CD4-positive, alpha-beta memory T cell (primary cell): ENCODE measurements at regions of chr17 and their contacts with region 1.

Region 1: DNA sequence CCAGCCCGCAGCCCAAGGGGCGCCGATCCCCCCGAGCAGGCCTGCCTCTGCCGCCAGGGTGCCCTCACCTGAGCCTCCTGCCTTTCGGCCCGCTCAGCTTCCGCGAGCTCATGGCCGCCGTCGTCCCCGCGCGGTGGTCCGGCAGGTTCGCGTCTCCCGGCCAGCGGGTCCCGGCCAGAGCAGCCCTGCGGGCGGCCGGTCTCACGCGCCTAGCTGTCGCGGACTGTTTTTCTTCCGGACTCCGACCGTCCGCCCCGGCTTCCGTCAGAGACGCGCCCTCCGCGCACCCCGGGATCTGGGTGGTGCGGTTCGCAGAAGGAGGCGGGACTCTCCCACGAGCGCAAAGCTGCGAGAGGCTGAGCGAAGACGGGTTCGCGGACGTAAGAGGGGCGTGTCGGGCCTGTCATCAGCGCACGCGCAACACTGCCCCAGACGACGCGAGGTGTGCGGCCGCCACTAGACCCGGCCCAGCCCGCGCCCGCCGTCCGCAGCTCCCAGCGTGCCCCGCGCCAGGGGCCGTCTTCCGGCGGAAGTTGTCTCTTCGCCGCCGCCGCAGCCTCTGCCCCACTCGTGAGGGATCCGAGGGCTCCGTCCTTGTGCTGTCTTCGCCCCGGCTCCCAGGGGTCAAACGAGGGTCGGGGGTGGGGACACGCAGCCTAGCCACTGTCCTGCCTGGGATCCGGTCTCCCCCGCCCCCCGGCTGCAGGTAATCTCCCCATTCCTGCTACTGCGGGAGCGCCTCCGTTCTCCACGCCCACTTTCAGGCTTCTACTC is at the start of gene INPP5K:
- DNase-seq: peak; percentile 97 to 99 (median 98)
- H3K4me3 ChIP-seq: peak within 1 kb of the TSS; percentile 68 to 97
- H3K4me3 Mint-ChIP-seq: peak within 1 kb of the TSS; percentile 90 to 95 (median 92)
- H3K27ac ChIP-seq: peak within 1 kb of the TSS; percentile 89
- H3K27ac Mint-ChIP-seq: peak within 1 kb of the TSS; percentile 92 to 97 (median 95)
- H3K4me1 ChIP-seq: peaks cover 26% of the 10 kb centered on the region
- H3K4me1 Mint-ChIP-seq: peaks cover 15 to 43% (median 29%) of the 10 kb centered on the region in 4 donors
- H3K27me3 ChIP-seq: no peaks in the 10 kb centered on the region
- H3K27me3 Mint-ChIP-seq: no peaks in the 10 kb centered on the region
- total RNA-seq, gene INPP5K: 73.6 to 78.5 TPM

Region 2: GRCh38 chr17:1331708-1332107 is 184.9 kb before region 1 on chr17:
- CTCF ChIA-PET with region 1: interaction called, 12 read pairs
- POLR2A ChIA-PET with region 1: interaction called, 5 read pairs
- intact Hi-C with region 1: no loop called
- DNase-seq: peak in 3 of 5 donors; percentile 20 to 41 (median 26)
- H3K4me3 ChIP-seq: no peak overlapping the region
- H3K4me3 Mint-ChIP-seq: peak overlapping the region in 4 of 8 donors; percentile 19 to 53 (median 40)
- H3K27ac ChIP-seq: no peak overlapping the region
- H3K27ac Mint-ChIP-seq: peak overlapping the region in 3 of 7 donors; percentile 31 to 85 (median 46)
- H3K4me1 ChIP-seq: peaks cover 9% of the 10 kb centered on the region
- H3K4me1 Mint-ChIP-seq: peaks cover 9 to 13% (median 11%) of the 10 kb centered on the region in 4 donors
- H3K27me3 ChIP-seq: no peaks in the 10 kb centered on the region
- H3K27me3 Mint-ChIP-seq: peaks cover 0 to 2% of the 10 kb centered on the region in 2 donors

Region 3: DNA sequence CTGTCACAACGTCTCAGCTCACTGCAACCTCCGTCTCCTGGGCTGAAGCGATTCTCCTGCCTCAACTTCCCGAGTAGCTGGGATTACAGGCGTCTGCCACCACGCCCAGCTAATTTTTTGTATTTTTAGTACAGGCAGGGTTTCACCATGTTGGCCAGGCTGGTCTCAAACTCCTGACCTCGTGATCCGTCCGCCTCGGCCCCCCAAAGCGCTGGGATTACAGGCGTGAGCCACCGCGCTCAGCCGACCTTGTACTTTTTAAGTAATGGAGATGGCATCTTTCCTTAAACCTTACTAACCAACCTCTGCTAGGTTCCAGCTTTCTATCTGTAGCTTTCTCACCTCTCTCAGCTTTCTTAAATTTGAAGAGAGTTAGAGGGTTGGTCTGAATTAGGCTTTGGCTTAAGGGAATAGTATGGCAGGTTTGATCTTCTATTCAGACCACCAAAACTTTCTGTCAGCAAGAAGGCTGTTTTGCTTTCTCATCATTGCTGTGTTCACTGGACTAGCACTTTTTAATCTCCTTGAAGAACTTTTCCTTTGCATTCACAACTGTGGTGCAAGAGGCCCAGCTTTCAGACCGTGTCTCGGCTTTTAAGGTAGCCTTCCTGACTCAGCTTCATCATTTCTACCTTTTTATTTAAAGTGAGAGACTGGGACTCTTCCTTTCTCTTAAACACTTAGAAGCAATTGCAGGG is 144.5 kb before region 1 on chr17:
- CTCF ChIA-PET with region 1: interaction called, 211 read pairs
- POLR2A ChIA-PET with region 1: interaction called, 136 read pairs
- intact Hi-C with region 1: no loop called
- DNase-seq: no peak
- H3K4me3 ChIP-seq: no peak overlapping the region
- H3K4me3 Mint-ChIP-seq: peak overlapping the region in 1 of 8 donors; percentile 10
- H3K27ac ChIP-seq: no peak overlapping the region
- H3K27ac Mint-ChIP-seq: peak overlapping the region in 4 of 7 donors; percentile 10 to 78 (median 48)
- H3K4me1 ChIP-seq: peaks cover 81% of the 10 kb centered on the region
- H3K4me1 Mint-ChIP-seq: peaks cover 41 to 79% (median 60%) of the 10 kb centered on the region in 4 donors
- H3K27me3 ChIP-seq: no peaks in the 10 kb centered on the region
- H3K27me3 Mint-ChIP-seq: no peaks in the 10 kb centered on the region

Region 4: GRCh38 chr17:1455797-1456599 is 60.6 kb before region 1 on chr17 and contains the start of gene CRK:
- CTCF ChIA-PET with region 1: interaction called, 12 read pairs
- POLR2A ChIA-PET with region 1: interaction called, 52 read pairs
- intact Hi-C with region 1: loop called (anchors 1 kb)
- DNase-seq: peak; percentile 96 to 99 (median 98)
- H3K4me3 ChIP-seq: peak within 1 kb of the TSS; percentile 81 to 92
- H3K4me3 Mint-ChIP-seq: peak within 1 kb of the TSS; percentile 88 to 96 (median 93)
- H3K27ac ChIP-seq: peak within 1 kb of the TSS; percentile 94
- H3K27ac Mint-ChIP-seq: peak within 1 kb of the TSS; percentile 80 to 96 (median 95)
- H3K4me1 ChIP-seq: peaks cover 43% of the 10 kb centered on the region
- H3K4me1 Mint-ChIP-seq: peaks cover 28 to 61% (median 45%) of the 10 kb centered on the region in 4 donors
- H3K27me3 ChIP-seq: no peaks in the 10 kb centered on the region
- H3K27me3 Mint-ChIP-seq: peaks cover 0 to 2% of the 10 kb centered on the region in 2 donors
- total RNA-seq, gene CRK: 29.3 to 32.1 TPM

Region 5: GRCh38 chr17:1503699-1504098 is 12.9 kb before region 1 on chr17:
- CTCF ChIA-PET with region 1: no interaction called
- POLR2A ChIA-PET with region 1: interaction called, 13 read pairs
- intact Hi-C with region 1: no loop called
- DNase-seq: no peak
- H3K4me3 ChIP-seq: no peak overlapping the region
- H3K4me3 Mint-ChIP-seq: no peak overlapping the region
- H3K27ac ChIP-seq: no peak overlapping the region
- H3K27ac Mint-ChIP-seq: peak overlapping the region in 2 of 7 donors; percentile 23 to 62
- H3K4me1 ChIP-seq: no peaks in the 10 kb centered on the region
- H3K4me1 Mint-ChIP-seq: peaks cover 0 to 1% (median 0%) of the 10 kb centered on the region in 4 donors
- H3K27me3 ChIP-seq: no peaks in the 10 kb centered on the region
- H3K27me3 Mint-ChIP-seq: no peaks in the 10 kb centered on the region

Region 6: GRCh38 chr17:1628856-1629646 is 112.5 kb after region 1 on chr17:
- CTCF ChIA-PET with region 1: interaction called, 4 read pairs
- POLR2A ChIA-PET with region 1: interaction called, 21 read pairs
- intact Hi-C with region 1: loop called (anchors 2 kb)
- DNase-seq: peak; percentile 83 to 90 (median 85)
- H3K4me3 ChIP-seq: peak overlapping the region; percentile 57 to 73
- H3K4me3 Mint-ChIP-seq: peak overlapping the region; percentile 87 to 99 (median 92)
- H3K27ac ChIP-seq: peak overlapping the region; percentile 44
- H3K27ac Mint-ChIP-seq: peak overlapping the region; percentile 75 to 96 (median 86)
- H3K4me1 ChIP-seq: peaks cover 22% of the 10 kb centered on the region
- H3K4me1 Mint-ChIP-seq: peaks cover 3 to 27% (median 12%) of the 10 kb centered on the region in 4 donors
- H3K27me3 ChIP-seq: peaks cover 8% of the 10 kb centered on the region
- H3K27me3 Mint-ChIP-seq: peaks cover 1% of the 10 kb centered on the region in 2 donors